ENCODE measurements at regions of chr6 and their contacts with region 1.

Region 1: DNA sequence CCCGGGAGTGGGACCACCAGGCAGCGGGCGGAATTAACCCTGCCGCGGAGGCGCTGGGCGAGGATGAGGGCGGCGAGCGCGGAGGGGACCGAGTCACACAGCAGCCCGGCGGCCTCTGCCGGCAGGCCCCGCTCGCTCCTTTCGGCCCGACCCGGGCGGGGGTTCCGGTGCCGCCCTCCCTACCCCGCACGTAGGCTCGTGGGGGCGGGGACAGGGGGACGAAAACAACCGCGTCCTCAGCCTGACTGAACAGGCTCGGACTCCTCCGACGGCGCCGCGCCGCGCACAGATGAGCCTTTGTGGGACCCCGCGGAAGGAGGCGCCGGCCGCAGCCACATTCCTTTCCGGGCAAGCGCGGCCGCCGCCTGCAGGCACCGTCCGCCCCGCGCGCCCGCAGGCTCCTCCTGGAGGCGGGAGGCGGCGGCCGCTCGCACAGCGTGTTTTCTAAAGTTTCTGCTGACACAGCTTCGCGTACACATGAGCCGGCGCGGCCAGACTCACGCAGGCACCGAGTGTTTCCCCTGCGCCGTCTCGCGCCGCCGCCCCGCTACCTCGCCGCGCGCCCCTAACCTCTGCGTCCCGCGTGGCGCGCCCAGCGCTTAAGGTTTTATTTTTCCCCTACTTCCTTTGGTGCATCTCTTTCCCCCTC is 244.3 kb downstream of the ARID1B start:
- DNase-seq: peak; percentile 90 to 92
- ATAC-seq: peak; percentile 74 to 92 (median 80)
- H3K4me3 ChIP-seq: peak overlapping the region; percentile 84
- H3K4me3 Mint-ChIP-seq: peak overlapping the region; percentile 95
- H3K27ac ChIP-seq: peak overlapping the region; percentile 97
- H3K27ac Mint-ChIP-seq: peak overlapping the region; percentile 96
- H3K4me1 ChIP-seq: peaks cover 6% of the 10 kb centered on the region
- H3K4me1 Mint-ChIP-seq: peaks cover 40 to 43% of the 10 kb centered on the region in 2 donors
- H3K27me3 ChIP-seq: no peaks in the 10 kb centered on the region
- H3K27me3 Mint-ChIP-seq: no peaks in the 10 kb centered on the region
- CTCF ChIP-seq: peak; percentile 39

Region 2: GRCh38 chr6:156686995-156687788 is 334.3 kb before region 1 on chr6:
- intact Hi-C with region 1: loop called (anchors 2 kb)
- DNase-seq: peak; percentile 80 to 93
- ATAC-seq: peak; percentile 89 to 95 (median 93)
- H3K4me3 ChIP-seq: peak overlapping the region; percentile 95
- H3K4me3 Mint-ChIP-seq: peak overlapping the region; percentile 92
- H3K27ac ChIP-seq: peak overlapping the region; percentile 96
- H3K27ac Mint-ChIP-seq: peak overlapping the region; percentile 72 to 75
- H3K4me1 ChIP-seq: peaks cover 12% of the 10 kb centered on the region
- H3K4me1 Mint-ChIP-seq: peaks cover 12 to 16% of the 10 kb centered on the region in 2 donors
- H3K27me3 ChIP-seq: no peaks in the 10 kb centered on the region
- H3K27me3 Mint-ChIP-seq: peaks cover 6 to 10% of the 10 kb centered on the region in 2 donors
- CTCF ChIP-seq: no peak

Region 3: DNA sequence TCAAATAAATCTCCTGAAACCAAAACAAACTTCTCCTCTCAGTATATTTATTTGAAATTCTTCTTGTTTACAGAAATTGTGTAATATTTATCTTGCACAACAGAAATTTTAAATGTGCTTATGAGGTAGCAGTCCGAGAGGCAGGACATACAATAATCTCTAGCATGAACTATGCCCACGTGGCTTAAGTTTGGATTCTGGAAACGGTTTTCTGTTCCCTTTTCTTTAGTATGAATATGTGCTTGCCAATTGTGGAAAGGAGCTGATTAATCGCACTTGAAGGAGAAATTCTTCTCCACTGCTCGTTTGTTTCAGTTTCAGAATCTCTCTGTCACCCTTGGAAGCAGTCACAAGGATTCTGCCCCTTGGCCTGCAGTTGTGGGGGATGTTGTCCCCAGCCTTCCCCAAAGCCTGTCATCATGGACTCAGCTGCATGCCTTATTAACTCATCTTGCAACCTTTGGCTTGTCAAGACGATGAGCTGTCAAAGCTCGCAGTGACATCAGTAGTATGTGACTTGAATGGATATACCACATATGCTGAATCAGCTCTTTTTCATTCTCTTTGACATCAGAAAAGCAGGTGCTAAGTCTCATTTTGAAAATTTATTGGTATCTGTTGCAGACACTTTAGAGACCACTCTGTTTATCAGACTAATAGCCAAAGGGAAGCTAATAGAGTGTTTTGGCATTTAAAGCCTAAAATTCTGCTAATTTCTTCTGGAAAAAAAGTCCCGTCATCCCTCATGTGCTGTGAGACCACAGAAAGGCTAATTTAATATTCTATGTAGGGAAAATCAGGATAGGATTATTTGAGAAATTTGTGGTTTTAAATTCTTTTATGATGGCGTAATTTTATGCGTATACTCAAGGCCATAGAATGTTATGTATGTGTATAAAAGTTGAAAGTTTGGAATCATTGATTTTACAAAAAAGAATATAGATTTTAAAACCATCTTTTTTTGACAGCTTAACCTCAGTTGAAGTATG is 57.5 kb before region 1 on chr6:
- intact Hi-C with region 1: no loop called
- DNase-seq: peak in 1 of 2 donors; percentile 29
- ATAC-seq: peak; percentile 34 to 50 (median 35)
- H3K4me3 ChIP-seq: no peak overlapping the region
- H3K4me3 Mint-ChIP-seq: no peak overlapping the region
- H3K27ac ChIP-seq: no peak overlapping the region
- H3K27ac Mint-ChIP-seq: peak overlapping the region in 1 of 2 donors; percentile 24
- H3K4me1 ChIP-seq: peaks cover 3% of the 10 kb centered on the region
- H3K4me1 Mint-ChIP-seq: peaks cover 36 to 41% of the 10 kb centered on the region in 2 donors
- H3K27me3 ChIP-seq: no peaks in the 10 kb centered on the region
- H3K27me3 Mint-ChIP-seq: no peaks in the 10 kb centered on the region
- CTCF ChIP-seq: no peak

Region 4: DNA sequence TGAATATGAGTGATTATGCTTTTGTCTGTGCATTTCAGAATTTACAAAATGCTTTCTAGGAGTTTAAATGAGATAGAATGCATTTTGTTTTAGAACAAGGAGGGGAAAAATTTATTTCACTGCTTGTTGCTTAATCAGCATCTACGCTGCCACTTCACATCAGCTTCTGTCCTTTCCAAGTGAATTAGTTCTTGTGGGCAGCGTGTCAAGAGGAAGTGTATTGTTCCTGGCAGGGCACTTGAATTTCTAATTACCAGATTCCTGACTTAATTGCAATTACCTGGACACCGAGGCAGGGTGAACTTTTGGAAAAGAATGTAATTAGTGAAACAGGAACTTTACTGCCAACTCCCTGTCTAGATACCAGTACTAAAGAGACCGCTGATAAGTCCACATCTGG is 38.3 kb after region 1 on chr6:
- intact Hi-C with region 1: loop called (anchors 5 kb)
- DNase-seq: no peak
- ATAC-seq: no peak
- H3K4me3 ChIP-seq: no peak overlapping the region
- H3K4me3 Mint-ChIP-seq: no peak overlapping the region
- H3K27ac ChIP-seq: no peak overlapping the region
- H3K27ac Mint-ChIP-seq: peak overlapping the region; percentile 90 to 92
- H3K4me1 ChIP-seq: peaks cover 30% of the 10 kb centered on the region
- H3K4me1 Mint-ChIP-seq: peaks cover 43 to 51% of the 10 kb centered on the region in 2 donors
- H3K27me3 ChIP-seq: no peaks in the 10 kb centered on the region
- H3K27me3 Mint-ChIP-seq: no peaks in the 10 kb centered on the region
- CTCF ChIP-seq: no peak

Region 5: GRCh38 chr6:157235600-157236039 is 214.2 kb after region 1 on chr6:
- intact Hi-C with region 1: loop called (anchors 5 kb)
- DNase-seq: peak; percentile 33 to 79
- ATAC-seq: peak; percentile 64 to 76 (median 74)
- H3K4me3 ChIP-seq: peak overlapping the region; percentile 45
- H3K4me3 Mint-ChIP-seq: peak overlapping the region; percentile 96
- H3K27ac ChIP-seq: no peak overlapping the region
- H3K27ac Mint-ChIP-seq: peak overlapping the region; percentile 43 to 92
- H3K4me1 ChIP-seq: peaks cover 24% of the 10 kb centered on the region
- H3K4me1 Mint-ChIP-seq: peaks cover 19 to 33% of the 10 kb centered on the region in 2 donors
- H3K27me3 ChIP-seq: peaks cover 29% of the 10 kb centered on the region
- H3K27me3 Mint-ChIP-seq: peaks cover 31 to 36% of the 10 kb centered on the region in 2 donors
- CTCF ChIP-seq: peak; percentile 58